GM12878 (cell line): ENCODE measurements at regions of chr11 and their contacts with region 1.

Region 1: GRCh38 chr11:60334005-60334620 is 7.1 kb downstream of the MS4A6E start:
- DNase-seq: no peak
- ATAC-seq: peak; percentile 65
- H3K4me3 ChIP-seq: no peak overlapping the region
- H3K27ac ChIP-seq: no peak overlapping the region
- H3K4me1 ChIP-seq: peaks cover 22% of the 10 kb centered on the region
- H3K27me3 ChIP-seq: no peaks in the 10 kb centered on the region
- CTCF ChIP-seq: peak; percentile 73 to 86 (median 74)
- EP300 ChIP-seq: no peak
- POLR2A ChIP-seq: no peak
- RAD21 ChIP-seq: peak; percentile 67

Region 2: DNA sequence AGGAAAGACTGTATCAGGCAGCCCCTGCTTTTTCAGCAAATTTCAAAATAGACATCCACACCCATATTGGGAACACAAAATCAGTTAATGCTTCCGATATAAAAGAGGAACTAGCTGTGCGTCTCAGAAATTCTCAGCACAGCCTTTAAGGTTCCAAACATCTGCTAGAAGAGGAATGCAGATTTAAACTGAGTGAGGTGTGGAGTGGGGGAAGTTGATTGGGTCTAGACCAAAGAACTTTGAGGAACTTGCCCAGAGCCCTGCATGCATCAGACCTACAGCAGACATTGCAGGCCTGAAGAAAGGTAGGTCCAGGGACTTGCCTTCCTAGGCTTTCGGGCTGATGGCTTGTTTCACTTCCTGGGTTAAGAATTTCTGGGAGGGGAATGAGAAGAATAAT is 53.7 kb before region 1 on chr11 and contains the start of gene MS4A4A:
- CTCF ChIA-PET with region 1: interaction called, 11 read pairs
- POLR2A ChIA-PET with region 1: no interaction called
- RAD21 ChIA-PET with region 1: interaction called, 3 read pairs
- SMC1A ChIA-PET with region 1: interaction called, 3 read pairs
- in situ Hi-C with region 1: no loop called
- intact Hi-C with region 1: no loop called
- DNase-seq: no peak
- ATAC-seq: peak; percentile 61
- H3K4me3 ChIP-seq: no peak within 1 kb of the TSS
- H3K27ac ChIP-seq: no peak within 1 kb of the TSS
- H3K4me1 ChIP-seq: no peaks in the 10 kb centered on the region
- H3K27me3 ChIP-seq: no peaks in the 10 kb centered on the region
- CTCF ChIP-seq: no peak
- EP300 ChIP-seq: no peak
- POLR2A ChIP-seq: no peak
- RAD21 ChIP-seq: no peak
- polyA plus RNA-seq, gene MS4A4A: 1.8 to 2.4 TPM

Region 3: GRCh38 chr11:60318726-60319125 is 15.4 kb before region 1 on chr11:
- CTCF ChIA-PET with region 1: interaction called, 93 read pairs
- POLR2A ChIA-PET with region 1: no interaction called
- RAD21 ChIA-PET with region 1: interaction called, 3 read pairs
- SMC1A ChIA-PET with region 1: interaction called, 15 read pairs
- in situ Hi-C with region 1: no loop called
- intact Hi-C with region 1: no loop called
- DNase-seq: no peak
- ATAC-seq: peak; percentile 73
- H3K4me3 ChIP-seq: no peak overlapping the region
- H3K27ac ChIP-seq: no peak overlapping the region
- H3K4me1 ChIP-seq: peaks cover 24% of the 10 kb centered on the region; the same call in 1 of the 2 replicates
- H3K27me3 ChIP-seq: no peaks in the 10 kb centered on the region
- CTCF ChIP-seq: no peak
- EP300 ChIP-seq: no peak
- POLR2A ChIP-seq: no peak
- RAD21 ChIP-seq: no peak

Region 4: DNA sequence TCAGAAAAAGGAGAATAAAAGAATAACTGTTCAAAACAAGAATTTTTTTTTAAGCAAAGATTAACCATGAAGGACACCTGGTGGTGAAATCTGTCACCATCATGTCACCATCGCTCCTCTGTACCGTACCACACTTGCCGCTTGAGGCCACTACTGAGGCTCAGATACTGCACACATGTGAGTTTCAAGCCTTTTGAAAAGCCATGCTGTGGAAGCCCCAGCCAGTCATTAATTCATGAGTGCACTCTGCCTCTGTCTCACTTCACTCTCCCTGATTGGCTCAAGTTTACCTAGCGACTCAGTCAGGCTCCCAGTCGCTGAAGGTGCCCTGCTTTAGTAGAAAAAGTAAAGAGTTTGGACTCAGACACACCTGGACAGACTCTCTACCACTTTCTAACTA is 151.9 kb after region 1 on chr11:
- CTCF ChIA-PET with region 1: interaction called, 19 read pairs
- POLR2A ChIA-PET with region 1: no interaction called
- RAD21 ChIA-PET with region 1: interaction called, 5 read pairs
- SMC1A ChIA-PET with region 1: interaction called, 24 read pairs
- in situ Hi-C with region 1: no loop called
- intact Hi-C with region 1: no loop called
- DNase-seq: peak; percentile 86
- ATAC-seq: peak; percentile 100
- H3K4me3 ChIP-seq: no peak overlapping the region
- H3K27ac ChIP-seq: no peak overlapping the region
- H3K4me1 ChIP-seq: peaks cover 9% of the 10 kb centered on the region
- H3K27me3 ChIP-seq: no peaks in the 10 kb centered on the region
- CTCF ChIP-seq: peak; percentile 91 to 100 (median 99); a peak in 5 of 6 replicates
- EP300 ChIP-seq: no peak
- POLR2A ChIP-seq: no peak
- RAD21 ChIP-seq: peak; percentile 93

Region 5: GRCh38 chr11:60625262-60625661 is 291.1 kb after region 1 on chr11:
- CTCF ChIA-PET with region 1: interaction called, 42 read pairs
- POLR2A ChIA-PET with region 1: no interaction called
- RAD21 ChIA-PET with region 1: no interaction called
- SMC1A ChIA-PET with region 1: interaction called, 18 read pairs
- in situ Hi-C with region 1: no loop called
- intact Hi-C with region 1: no loop called
- DNase-seq: no peak
- ATAC-seq: peak; percentile 61
- H3K4me3 ChIP-seq: no peak overlapping the region
- H3K27ac ChIP-seq: no peak overlapping the region
- H3K4me1 ChIP-seq: no peaks in the 10 kb centered on the region
- H3K27me3 ChIP-seq: no peaks in the 10 kb centered on the region
- CTCF ChIP-seq: peak; percentile 17 to 22 (median 20); a peak in 3 of 6 replicates
- EP300 ChIP-seq: no peak
- POLR2A ChIP-seq: no peak
- RAD21 ChIP-seq: no peak

Region 6: DNA sequence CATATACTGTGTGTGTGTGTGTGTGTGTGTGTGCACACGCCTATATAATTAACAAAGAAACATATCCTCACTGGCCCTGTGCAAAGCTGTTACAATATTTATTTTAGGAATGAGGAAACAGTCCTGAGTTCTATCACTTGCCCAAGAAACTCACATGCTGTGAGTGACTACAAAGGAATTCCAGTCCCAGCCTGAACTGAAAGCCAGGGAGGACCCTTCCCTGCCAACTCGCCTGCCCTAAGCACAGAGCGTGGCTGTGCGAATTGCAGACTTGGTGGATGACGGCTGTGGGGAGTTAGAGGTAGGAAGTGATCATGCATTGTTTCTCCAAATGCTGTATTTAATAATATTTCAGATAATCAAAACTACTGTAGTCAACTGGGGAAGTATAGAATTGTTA is 741.8 kb after region 1 on chr11:
- CTCF ChIA-PET with region 1: no interaction called
- POLR2A ChIA-PET with region 1: no interaction called
- RAD21 ChIA-PET with region 1: no interaction called
- SMC1A ChIA-PET with region 1: no interaction called
- in situ Hi-C with region 1: no loop called
- intact Hi-C with region 1: no loop called
- DNase-seq: no peak
- ATAC-seq: no peak
- H3K4me3 ChIP-seq: no peak overlapping the region
- H3K27ac ChIP-seq: no peak overlapping the region
- H3K4me1 ChIP-seq: peaks cover 11% of the 10 kb centered on the region
- H3K27me3 ChIP-seq: no peaks in the 10 kb centered on the region
- CTCF ChIP-seq: no peak
- EP300 ChIP-seq: no peak
- POLR2A ChIP-seq: no peak
- RAD21 ChIP-seq: no peak